ENCODE measurements at regions of chr9 and their contacts with region 1.

Region 1: DNA sequence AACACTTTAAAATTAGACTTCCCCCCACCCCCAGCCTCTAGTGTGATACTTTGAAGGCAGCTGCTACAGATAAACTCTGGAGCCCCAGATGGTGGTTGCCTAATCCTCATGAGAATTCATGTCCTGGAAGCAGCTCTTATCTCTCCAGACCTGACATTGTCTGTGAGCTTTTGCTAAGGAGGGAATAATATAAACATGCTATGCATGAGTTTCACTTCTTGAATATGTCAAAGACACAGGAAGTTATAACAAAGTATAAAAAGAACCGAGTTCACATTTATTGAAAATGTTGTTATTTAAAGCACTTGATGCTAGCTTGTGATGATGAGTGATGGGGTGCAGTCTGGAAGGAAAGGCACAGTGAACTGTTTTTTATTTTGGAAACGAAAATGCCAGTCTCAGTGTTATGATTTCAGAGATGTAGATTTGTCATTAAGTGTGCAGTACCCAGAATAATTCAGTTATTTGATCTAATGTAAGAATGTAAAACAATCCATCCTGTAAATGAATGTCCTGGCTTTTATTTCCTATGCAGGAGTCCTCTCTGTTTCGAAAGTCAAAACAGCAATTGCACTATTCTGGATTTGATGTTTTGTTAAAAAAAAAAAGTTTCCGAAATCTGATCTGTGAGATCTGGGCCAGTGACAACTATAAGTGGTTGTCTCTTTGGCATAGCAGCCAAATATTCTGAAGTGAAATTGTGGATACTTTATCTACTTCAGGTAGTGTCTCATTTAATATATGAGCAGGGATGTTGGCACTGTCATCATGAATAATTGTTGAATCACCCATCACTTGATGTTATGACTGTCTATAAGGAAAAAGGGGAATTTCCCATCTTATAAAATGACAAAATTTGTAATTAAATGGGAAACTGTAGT is 77.0 kb downstream of the ZCCHC7 start:
- DNase-seq: peak; percentile 99
- H3K4me3 ChIP-seq: peak overlapping the region; percentile 60
- H3K27ac ChIP-seq: peak overlapping the region; percentile 99
- H3K4me1 ChIP-seq: peaks cover 97% of the 10 kb centered on the region
- CTCF ChIP-seq: no peak

Region 2: DNA sequence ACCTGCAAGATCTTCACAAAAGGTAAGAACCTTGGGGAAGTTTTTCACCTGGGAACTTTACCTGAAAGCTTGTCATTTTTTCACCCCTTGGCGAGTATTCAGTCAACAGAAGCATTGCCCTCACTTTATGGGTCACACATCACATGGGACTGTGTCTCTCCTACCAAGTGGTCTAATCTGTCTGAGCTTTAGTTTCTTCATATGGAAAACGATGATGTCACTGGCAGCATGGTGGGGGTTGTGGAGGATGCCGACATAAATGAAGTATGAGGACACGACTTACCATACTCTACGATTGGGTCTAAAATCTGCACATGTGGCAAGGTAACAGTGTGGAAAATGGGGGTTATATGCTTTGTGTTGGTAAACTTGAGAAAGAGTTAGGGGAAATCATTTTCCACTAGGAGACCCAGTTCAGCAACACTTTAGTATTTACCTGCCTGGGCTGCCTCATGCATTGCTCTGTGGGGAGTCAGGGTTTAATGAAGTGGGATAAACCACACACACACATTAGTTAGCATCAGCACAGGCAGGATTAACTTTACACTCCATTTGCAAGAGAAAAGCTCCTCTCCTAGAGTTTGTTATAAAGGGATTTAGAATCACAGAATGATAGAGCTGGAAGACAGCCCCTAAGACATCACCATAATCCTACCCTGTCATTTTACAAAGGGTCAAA is 143.6 kb before region 1 on chr9:
- CTCF ChIA-PET with region 1: no interaction called
- POLR2A ChIA-PET with region 1: no interaction called
- intact Hi-C with region 1: no loop called
- DNase-seq: no peak
- H3K4me3 ChIP-seq: no peak overlapping the region
- H3K27ac ChIP-seq: no peak overlapping the region
- H3K4me1 ChIP-seq: peaks cover 16% of the 10 kb centered on the region
- CTCF ChIP-seq: no peak

Region 3: DNA sequence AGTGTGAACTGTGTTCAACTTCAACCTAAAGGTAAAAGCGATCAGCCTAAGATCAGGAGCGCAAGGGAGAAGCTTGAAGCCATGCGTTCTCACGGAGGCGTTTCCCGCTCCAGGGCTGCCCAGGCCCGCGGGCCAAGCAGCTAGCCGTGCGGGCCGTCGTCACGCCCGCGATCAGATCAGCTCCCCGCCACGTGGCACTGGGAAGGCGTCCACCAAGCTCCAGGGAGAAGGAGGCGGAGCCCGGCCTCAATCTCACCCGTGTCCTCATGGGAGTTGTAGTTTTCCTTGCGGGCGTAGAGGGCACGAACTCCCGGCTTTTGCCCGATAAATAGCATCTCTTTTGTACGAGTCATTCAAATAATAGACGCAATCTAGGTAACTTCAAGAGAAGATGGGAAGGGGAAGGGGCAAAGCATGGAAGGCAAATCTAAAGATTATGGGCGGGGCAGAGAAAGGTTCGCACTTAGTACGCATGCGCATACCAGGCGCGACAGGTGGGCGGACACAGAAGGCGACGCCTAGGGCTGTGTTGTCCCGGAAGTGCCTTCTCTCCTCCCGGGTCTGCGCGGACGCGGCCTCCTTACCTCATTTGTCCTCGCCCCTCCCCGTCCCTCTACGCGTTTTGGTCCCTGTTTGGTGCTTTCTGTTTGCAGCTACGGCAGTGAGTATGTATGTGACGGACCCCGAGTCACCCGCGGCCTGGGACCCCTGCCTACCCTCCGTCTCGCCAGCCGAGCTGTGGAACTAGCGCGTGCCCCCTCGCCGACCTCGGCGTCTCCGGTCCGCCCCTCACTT is 117.8 kb before region 1 on chr9:
- CTCF ChIA-PET with region 1: interaction called, 3 read pairs
- POLR2A ChIA-PET with region 1: interaction called, 12 read pairs
- intact Hi-C with region 1: loop called (anchors 2 kb)
- DNase-seq: peak; percentile 97
- H3K4me3 ChIP-seq: peak overlapping the region; percentile 90
- H3K27ac ChIP-seq: peak overlapping the region; percentile 70
- H3K4me1 ChIP-seq: peaks cover 63% of the 10 kb centered on the region
- CTCF ChIP-seq: no peak

Region 4: DNA sequence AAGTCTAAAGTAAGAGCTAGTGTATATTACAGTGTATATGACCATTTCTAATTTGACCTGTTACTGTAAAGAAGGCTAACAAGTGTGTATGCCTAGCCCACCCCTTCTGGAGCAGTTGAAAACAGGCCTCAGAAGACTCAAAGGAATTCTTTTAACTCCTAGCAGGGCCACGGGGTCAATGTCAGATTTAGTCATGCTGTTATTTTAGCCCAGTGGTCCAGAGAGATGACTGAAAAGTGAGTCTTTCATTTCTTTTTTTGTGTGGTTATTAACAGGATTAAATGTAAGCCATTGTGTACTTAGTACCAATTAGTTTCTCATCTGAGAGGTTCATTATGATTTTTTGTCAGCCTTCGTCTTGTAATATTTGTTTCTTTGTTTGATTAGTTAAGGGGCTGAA is 52.6 kb before region 1 on chr9:
- CTCF ChIA-PET with region 1: no interaction called
- POLR2A ChIA-PET with region 1: interaction called, 4 read pairs
- intact Hi-C with region 1: loop called (anchors 2 kb)
- DNase-seq: peak; percentile 65
- H3K4me3 ChIP-seq: peak overlapping the region; percentile 61
- H3K27ac ChIP-seq: peak overlapping the region; percentile 74
- H3K4me1 ChIP-seq: peaks cover 85% of the 10 kb centered on the region
- CTCF ChIP-seq: no peak

Region 5: GRCh38 chr9:37215830-37216229 is 18.4 kb after region 1 on chr9:
- CTCF ChIA-PET with region 1: no interaction called
- POLR2A ChIA-PET with region 1: interaction called, 31 read pairs
- intact Hi-C with region 1: no loop called
- DNase-seq: no peak
- H3K4me3 ChIP-seq: no peak overlapping the region
- H3K27ac ChIP-seq: no peak overlapping the region
- H3K4me1 ChIP-seq: peaks cover 43% of the 10 kb centered on the region
- CTCF ChIP-seq: no peak

Region 6: DNA sequence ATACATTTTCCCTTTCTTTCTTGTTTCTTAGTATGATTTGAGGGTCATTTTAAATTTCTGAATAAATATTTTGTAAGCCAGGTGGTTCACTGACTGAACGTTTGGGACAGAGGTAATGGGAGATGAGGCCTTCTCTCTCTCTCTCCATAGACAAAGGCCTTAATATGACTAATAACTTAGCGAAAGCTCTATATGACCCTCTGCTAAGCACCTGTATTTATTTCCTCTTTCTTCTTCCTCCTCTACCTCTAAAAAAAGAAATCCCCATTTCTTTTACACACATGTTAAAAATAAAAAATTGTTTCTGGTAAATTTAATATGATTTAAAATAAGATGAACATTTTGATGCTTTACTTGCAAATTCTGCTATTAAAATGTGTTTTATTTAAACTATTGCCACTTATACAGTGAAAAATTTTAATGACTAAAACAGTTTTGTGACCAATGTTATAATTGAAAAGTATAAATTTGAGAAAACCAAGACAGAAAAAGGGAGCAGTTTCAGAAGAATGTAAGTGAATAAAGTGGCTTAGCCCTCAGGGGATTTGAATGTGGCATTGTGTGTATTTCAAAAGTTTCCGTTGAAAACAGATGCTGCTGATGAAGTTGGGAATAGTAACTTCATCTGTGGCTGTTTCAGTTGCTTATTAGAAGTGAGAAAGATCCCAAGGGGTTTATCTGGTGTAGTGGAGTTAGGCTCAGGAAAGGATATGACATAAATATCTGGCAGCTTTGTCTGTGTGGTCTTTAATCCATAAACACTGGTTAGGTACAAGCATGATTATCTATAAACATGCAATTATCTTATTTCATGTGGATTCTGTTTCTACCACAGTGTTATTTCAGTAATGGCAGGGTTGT is 96.5 kb after region 1 on chr9:
- CTCF ChIA-PET with region 1: interaction called, 4 read pairs
- POLR2A ChIA-PET with region 1: interaction called, 269 read pairs
- intact Hi-C with region 1: loop called (anchors 1 kb)
- DNase-seq: peak; percentile 97
- H3K4me3 ChIP-seq: peak overlapping the region; percentile 46
- H3K27ac ChIP-seq: peak overlapping the region; percentile 99
- H3K4me1 ChIP-seq: peaks cover 100% of the 10 kb centered on the region
- CTCF ChIP-seq: no peak

Region 7: DNA sequence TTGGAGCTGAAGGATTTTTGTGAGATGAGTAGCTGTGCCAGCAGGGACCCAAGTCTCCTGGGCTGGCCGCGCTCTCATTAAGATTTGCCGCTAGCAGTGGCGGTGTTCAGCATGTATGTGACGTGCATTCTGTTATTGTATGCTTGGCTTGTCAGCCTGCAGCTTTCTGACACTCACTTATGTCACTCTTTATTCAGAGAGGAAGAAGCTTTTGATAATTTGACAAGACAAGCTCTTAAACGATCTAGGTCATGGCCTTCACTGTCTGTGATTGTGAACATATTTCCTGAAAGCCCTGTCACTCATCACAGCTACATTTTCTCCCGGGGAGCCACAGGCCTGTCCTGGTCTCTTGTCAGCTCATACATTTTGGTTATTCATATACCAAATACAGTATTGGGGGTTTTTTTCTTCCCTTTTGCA is 126.9 kb after region 1 on chr9:
- CTCF ChIA-PET with region 1: interaction called, 4 read pairs
- POLR2A ChIA-PET with region 1: interaction called, 13 read pairs
- intact Hi-C with region 1: loop called (anchors 1 kb)
- DNase-seq: peak; percentile 80
- H3K4me3 ChIP-seq: peak overlapping the region; percentile 35
- H3K27ac ChIP-seq: peak overlapping the region; percentile 98
- H3K4me1 ChIP-seq: peaks cover 81% of the 10 kb centered on the region
- CTCF ChIP-seq: no peak